Esophagus muscularis mucosa (tissue), 4 donors: ENCODE measurements at regions of chr17 and their contacts with region 1.

Region 1: DNA sequence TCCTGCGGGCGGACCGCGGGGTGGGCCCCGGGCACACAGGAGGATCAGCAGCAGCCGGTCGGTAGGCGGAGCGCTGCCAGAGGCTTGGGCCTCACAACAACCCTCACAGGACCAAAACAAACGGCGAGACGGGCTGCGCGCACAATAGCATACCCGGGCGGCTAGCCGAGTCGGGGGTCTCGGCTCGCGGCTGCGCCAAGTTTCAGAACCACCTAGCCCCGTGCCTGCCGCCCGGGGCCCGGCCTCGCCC is 747 bp downstream of the ULK2 start:
- DNase-seq: no peak
- H3K4me3 ChIP-seq: peak overlapping the region; percentile 83 to 98 (median 94)
- H3K27ac ChIP-seq: peak overlapping the region; percentile 86 to 92 (median 90)
- H3K4me1 ChIP-seq: peaks cover 17 to 27% (median 23%) of the 10 kb centered on the region in 4 donors
- H3K27me3 ChIP-seq: no peaks in the 10 kb centered on the region
- CTCF ChIP-seq: peak; percentile 15 to 37 (median 18)
- EP300 ChIP-seq: no peak
- POLR2A ChIP-seq: no peak

Region 2: GRCh38 chr17:19724501-19725420 is 142.2 kb before region 1 on chr17:
- intact Hi-C with region 1: no loop called
- DNase-seq: no peak
- H3K4me3 ChIP-seq: peak overlapping the region; percentile 47 to 53 (median 50)
- H3K27ac ChIP-seq: peak overlapping the region; percentile 61 to 83 (median 66)
- H3K4me1 ChIP-seq: peaks cover 39 to 62% (median 53%) of the 10 kb centered on the region in 4 donors
- H3K27me3 ChIP-seq: no peaks in the 10 kb centered on the region
- CTCF ChIP-seq: no peak
- EP300 ChIP-seq: no peak
- POLR2A ChIP-seq: no peak

Region 3: DNA sequence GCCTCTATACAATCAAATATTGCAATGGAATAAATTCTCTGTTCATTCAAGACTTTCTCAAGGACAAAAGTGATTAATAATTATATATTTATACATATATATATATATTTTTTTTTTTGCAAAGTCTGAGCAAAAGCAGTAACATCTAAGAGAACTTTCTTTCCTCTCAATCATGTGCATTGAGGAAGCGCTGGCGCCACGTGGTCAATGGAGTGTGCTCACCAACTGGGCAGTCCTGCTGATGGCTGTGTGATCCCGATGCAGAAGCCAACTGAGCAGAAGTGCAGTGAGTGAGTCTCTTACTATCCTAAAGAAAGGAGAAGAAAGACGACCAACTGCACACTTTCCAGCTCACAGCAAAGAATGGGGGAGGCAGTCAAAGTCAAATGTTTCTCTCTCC is 37.9 kb after region 1 on chr17:
- intact Hi-C with region 1: loop called (anchors 5 kb)
- DNase-seq: no peak
- H3K4me3 ChIP-seq: no peak overlapping the region
- H3K27ac ChIP-seq: no peak overlapping the region
- H3K4me1 ChIP-seq: peaks cover 0 to 18% (median 13%) of the 10 kb centered on the region in 4 donors
- H3K27me3 ChIP-seq: no peaks in the 10 kb centered on the region
- CTCF ChIP-seq: no peak
- EP300 ChIP-seq: no peak
- POLR2A ChIP-seq: no peak